Mammary epithelial cell (primary cell): ENCODE measurements at regions of chr6 and their contacts with region 1.

Region 1: GRCh38 chr6:96391776-96392360 is 129.7 kb upstream of the UFL1 start:
- DNase-seq: no peak
- H3K4me3 ChIP-seq: no peak overlapping the region
- H3K27ac ChIP-seq: no peak overlapping the region
- H3K4me1 ChIP-seq: no peaks in the 10 kb centered on the region
- H3K27me3 ChIP-seq: no peaks in the 10 kb centered on the region
- CTCF ChIP-seq: no peak

Region 2: DNA sequence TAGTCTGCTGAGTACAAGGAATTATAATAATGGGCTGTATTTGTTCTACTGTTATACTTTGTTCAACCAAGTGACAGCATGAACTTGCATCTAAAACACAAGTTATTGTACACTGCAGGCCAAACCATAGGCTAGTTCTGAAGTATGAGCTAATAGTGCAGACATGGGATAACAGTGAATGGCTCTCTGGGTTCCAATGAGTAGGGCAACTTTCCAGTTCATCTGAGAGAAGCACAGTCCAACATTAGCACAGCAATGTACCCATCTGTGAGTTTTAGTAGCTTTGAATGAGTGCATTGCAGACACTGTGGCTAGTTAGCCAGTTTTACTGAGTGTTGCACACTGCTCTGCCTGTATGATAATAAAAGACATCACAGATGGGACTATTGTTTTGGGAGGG is 432.6 kb before region 1 on chr6:
- CTCF ChIA-PET with region 1: no interaction called
- dilution Hi-C with region 1: no loop called
- in situ Hi-C with region 1: no loop called
- intact Hi-C with region 1: no loop called
- DNase-seq: no peak
- H3K4me3 ChIP-seq: no peak overlapping the region
- H3K27ac ChIP-seq: no peak overlapping the region
- H3K4me1 ChIP-seq: no peaks in the 10 kb centered on the region
- H3K27me3 ChIP-seq: no peaks in the 10 kb centered on the region
- CTCF ChIP-seq: no peak

Region 3: DNA sequence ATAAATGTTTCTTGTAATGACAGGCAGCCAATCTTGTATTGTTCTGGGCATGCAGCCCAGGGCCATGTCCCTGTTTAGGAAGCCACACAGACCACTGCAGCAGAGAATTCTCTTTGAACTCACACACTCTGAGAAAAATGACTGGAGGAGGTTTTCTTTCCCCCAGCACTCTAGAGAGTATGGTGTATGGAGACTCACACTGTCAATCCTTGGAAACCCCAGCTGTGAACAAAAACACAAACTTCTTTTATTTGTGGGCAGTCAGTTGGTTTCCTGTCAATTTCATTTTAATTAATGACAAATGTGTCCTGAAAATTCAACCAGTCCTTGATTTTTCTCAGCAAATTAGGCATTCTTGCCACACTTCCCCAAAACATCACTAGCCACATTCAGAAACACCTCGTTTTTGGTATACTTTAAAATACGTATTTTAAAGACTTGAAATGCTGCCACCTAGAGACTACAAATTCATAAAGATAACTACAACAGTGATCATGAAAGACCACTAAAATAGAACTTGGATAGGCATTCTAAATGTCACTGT is 76.9 kb after region 1 on chr6:
- CTCF ChIA-PET with region 1: no interaction called
- dilution Hi-C with region 1: no loop called
- in situ Hi-C with region 1: no loop called
- intact Hi-C with region 1: loop called (anchors 1 kb)
- DNase-seq: no peak
- H3K4me3 ChIP-seq: no peak overlapping the region
- H3K27ac ChIP-seq: no peak overlapping the region
- H3K4me1 ChIP-seq: no peaks in the 10 kb centered on the region
- H3K27me3 ChIP-seq: no peaks in the 10 kb centered on the region
- CTCF ChIP-seq: peak; percentile 18 to 28

Region 4: GRCh38 chr6:96521644-96522464 is 130.0 kb after region 1 on chr6 and contains the start of gene UFL1:
- CTCF ChIA-PET with region 1: no interaction called
- dilution Hi-C with region 1: no loop called
- in situ Hi-C with region 1: no loop called
- intact Hi-C with region 1: loop called (anchors 1 kb)
- DNase-seq: peak; percentile 87
- H3K4me3 ChIP-seq: peak within 1 kb of the TSS; percentile 95 to 100 (median 99)
- H3K27ac ChIP-seq: peak within 1 kb of the TSS; percentile 91
- H3K4me1 ChIP-seq: peaks cover 19% of the 10 kb centered on the region
- H3K27me3 ChIP-seq: no peaks in the 10 kb centered on the region
- CTCF ChIP-seq: peak in 1 of 2 donors; percentile 30
- total RNA-seq, gene UFL1: 25.8 to 26.5 TPM